ENCODE measurements at regions of chr1 and their contacts with region 1.

Region 1: DNA sequence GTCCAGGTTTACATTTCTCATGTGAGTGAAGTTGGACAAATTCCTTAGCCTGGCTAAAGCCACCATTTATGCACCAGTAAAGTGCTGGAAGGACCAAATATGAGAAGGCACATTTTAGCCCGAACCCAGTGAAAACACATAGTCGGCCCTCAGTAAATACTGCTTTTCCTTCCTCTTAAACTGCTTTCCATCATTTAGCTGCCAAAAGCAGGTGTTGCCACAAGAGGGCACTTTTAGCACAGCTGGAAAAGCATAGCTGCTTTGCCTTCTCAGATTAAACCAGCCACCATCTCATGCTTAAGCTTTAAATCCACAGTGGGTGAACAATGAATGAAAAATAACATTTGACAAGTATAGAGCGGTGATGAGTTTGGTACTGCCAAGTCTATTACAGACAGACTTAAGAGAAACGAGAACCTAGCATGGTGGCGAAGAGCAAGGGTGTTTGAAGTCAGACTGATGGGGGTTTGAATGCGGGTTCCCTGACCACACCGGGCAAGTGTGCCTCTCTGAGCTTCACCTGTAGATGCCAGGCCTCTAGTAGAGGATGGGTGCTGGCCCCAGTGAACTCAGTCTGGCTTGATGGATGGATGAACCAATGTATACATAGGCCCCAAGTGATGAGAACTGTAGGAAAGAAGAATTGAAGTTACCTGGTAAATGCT is 57.8 kb downstream of the SLC35D1 start:
- DNase-seq: peak; percentile 29 to 74 (median 57)
- ATAC-seq: peak; percentile 86
- H3K4me3 ChIP-seq: no peak overlapping the region
- H3K4me3 Mint-ChIP-seq: no peak overlapping the region
- H3K27ac ChIP-seq: no peak overlapping the region
- H3K27ac Mint-ChIP-seq: peak overlapping the region; percentile 32
- H3K4me1 ChIP-seq: peaks cover 5% of the 10 kb centered on the region
- H3K4me1 Mint-ChIP-seq: peaks cover 21% of the 10 kb centered on the region
- H3K27me3 ChIP-seq: no peaks in the 10 kb centered on the region
- H3K27me3 Mint-ChIP-seq: no peaks in the 10 kb centered on the region
- CTCF ChIP-seq: peak; percentile 70

Region 2: GRCh38 chr1:66860529-66860928 is 135.6 kb before region 1 on chr1:
- CTCF ChIA-PET with region 1: no interaction called
- POLR2A ChIA-PET with region 1: no interaction called
- intact Hi-C with region 1: no loop called
- DNase-seq: no peak
- ATAC-seq: no peak
- H3K4me3 ChIP-seq: no peak overlapping the region
- H3K4me3 Mint-ChIP-seq: no peak overlapping the region
- H3K27ac ChIP-seq: no peak overlapping the region
- H3K27ac Mint-ChIP-seq: no peak overlapping the region
- H3K4me1 ChIP-seq: no peaks in the 10 kb centered on the region
- H3K4me1 Mint-ChIP-seq: no peaks in the 10 kb centered on the region
- H3K27me3 ChIP-seq: no peaks in the 10 kb centered on the region
- H3K27me3 Mint-ChIP-seq: no peaks in the 10 kb centered on the region
- CTCF ChIP-seq: no peak

Region 3: DNA sequence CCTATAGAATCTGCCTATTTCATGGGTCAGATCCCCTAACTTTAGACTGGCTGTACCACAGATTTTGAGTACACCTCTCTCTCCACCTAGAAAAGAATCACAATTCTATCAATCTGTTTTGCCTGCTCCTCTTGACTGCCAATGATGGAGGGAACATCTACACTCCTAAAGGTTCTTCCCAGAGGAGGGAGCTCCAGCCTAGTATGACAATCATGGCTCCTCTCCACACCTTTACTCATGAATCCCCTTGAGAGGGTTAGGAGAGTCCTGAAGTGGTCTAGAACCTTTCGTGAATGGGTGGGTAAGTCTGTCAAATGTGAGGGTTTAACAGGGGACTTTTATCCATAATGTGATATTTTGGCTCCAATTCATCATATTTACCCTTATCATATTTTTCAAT is 119.5 kb before region 1 on chr1:
- CTCF ChIA-PET with region 1: no interaction called
- POLR2A ChIA-PET with region 1: no interaction called
- intact Hi-C with region 1: no loop called
- DNase-seq: peak in 1 of 9 experiments; percentile 1
- ATAC-seq: no peak
- H3K4me3 ChIP-seq: no peak overlapping the region
- H3K4me3 Mint-ChIP-seq: no peak overlapping the region
- H3K27ac ChIP-seq: no peak overlapping the region
- H3K27ac Mint-ChIP-seq: no peak overlapping the region
- H3K4me1 ChIP-seq: no peaks in the 10 kb centered on the region
- H3K4me1 Mint-ChIP-seq: no peaks in the 10 kb centered on the region
- H3K27me3 ChIP-seq: no peaks in the 10 kb centered on the region
- H3K27me3 Mint-ChIP-seq: no peaks in the 10 kb centered on the region
- CTCF ChIP-seq: no peak

Region 4: DNA sequence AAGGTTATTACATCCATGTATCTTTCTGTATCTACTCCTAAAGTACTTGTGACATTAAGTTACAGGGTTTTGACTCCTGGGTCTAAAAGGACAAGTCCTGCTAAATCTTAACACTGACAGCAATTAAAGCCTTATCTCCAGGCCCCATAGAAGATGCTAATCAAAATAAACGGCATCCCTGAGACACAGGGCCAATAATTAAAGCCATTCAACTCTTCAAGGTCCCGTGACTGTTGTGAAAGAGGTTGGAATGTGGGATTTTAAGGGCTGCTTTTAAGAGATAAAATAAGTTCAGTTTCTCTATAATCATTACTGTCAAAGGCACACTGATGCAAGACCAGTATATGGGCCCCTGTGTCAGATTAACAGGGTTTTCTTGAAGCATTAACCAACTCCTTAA is 79.8 kb before region 1 on chr1:
- CTCF ChIA-PET with region 1: no interaction called
- POLR2A ChIA-PET with region 1: no interaction called
- intact Hi-C with region 1: no loop called
- DNase-seq: no peak
- ATAC-seq: no peak
- H3K4me3 ChIP-seq: no peak overlapping the region
- H3K4me3 Mint-ChIP-seq: no peak overlapping the region
- H3K27ac ChIP-seq: no peak overlapping the region
- H3K27ac Mint-ChIP-seq: no peak overlapping the region
- H3K4me1 ChIP-seq: no peaks in the 10 kb centered on the region
- H3K4me1 Mint-ChIP-seq: no peaks in the 10 kb centered on the region
- H3K27me3 ChIP-seq: no peaks in the 10 kb centered on the region
- H3K27me3 Mint-ChIP-seq: no peaks in the 10 kb centered on the region
- CTCF ChIP-seq: no peak

Region 5: GRCh38 chr1:66981679-66982078 is 14.5 kb before region 1 on chr1:
- CTCF ChIA-PET with region 1: interaction called, 11 read pairs
- POLR2A ChIA-PET with region 1: interaction called, 4 read pairs
- intact Hi-C with region 1: loop called in 1 of 2 experiments (anchors 2 kb)
- DNase-seq: peak; percentile 18 to 86 (median 52)
- ATAC-seq: peak; percentile 96
- H3K4me3 ChIP-seq: peak overlapping the region; percentile 38 to 48
- H3K4me3 Mint-ChIP-seq: peak overlapping the region; percentile 75
- H3K27ac ChIP-seq: peak overlapping the region; percentile 44 to 78
- H3K27ac Mint-ChIP-seq: peak overlapping the region; percentile 79
- H3K4me1 ChIP-seq: peaks cover 22% of the 10 kb centered on the region
- H3K4me1 Mint-ChIP-seq: peaks cover 30% of the 10 kb centered on the region
- H3K27me3 ChIP-seq: no peaks in the 10 kb centered on the region
- H3K27me3 Mint-ChIP-seq: no peaks in the 10 kb centered on the region
- CTCF ChIP-seq: no peak

Region 6: DNA sequence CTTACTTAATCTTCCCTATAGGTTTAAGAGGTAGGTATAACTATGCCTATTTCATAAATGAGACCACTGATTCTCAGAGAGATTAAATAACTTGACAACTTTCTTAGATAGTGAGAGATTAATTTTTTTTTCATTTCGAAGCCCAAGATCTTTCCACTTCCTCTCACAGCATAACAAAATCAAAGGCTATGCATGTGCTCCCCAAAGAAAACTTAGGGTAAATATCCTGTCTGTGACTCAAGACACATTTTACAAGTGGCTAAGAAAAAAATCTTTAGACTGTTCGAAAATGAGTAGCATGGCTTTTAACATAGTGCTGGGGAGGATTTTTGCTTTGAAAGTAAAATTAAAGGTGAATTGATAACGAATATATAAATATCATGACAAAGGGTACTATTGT is 146.8 kb after region 1 on chr1:
- CTCF ChIA-PET with region 1: interaction called, 91 read pairs
- POLR2A ChIA-PET with region 1: interaction called, 4 read pairs
- intact Hi-C with region 1: loop called in 1 of 2 experiments (anchors 1 kb)
- DNase-seq: peak in 2 of 9 experiments; percentile 34 to 60
- ATAC-seq: peak; percentile 84
- H3K4me3 ChIP-seq: no peak overlapping the region
- H3K4me3 Mint-ChIP-seq: peak overlapping the region; percentile 53
- H3K27ac ChIP-seq: no peak overlapping the region
- H3K27ac Mint-ChIP-seq: peak overlapping the region; percentile 89
- H3K4me1 ChIP-seq: peaks cover 16% of the 10 kb centered on the region
- H3K4me1 Mint-ChIP-seq: peaks cover 37% of the 10 kb centered on the region
- H3K27me3 ChIP-seq: no peaks in the 10 kb centered on the region
- H3K27me3 Mint-ChIP-seq: no peaks in the 10 kb centered on the region
- CTCF ChIP-seq: no peak